ENCODE measurements at regions of chr3 and their contacts with region 1.

Region 1: GRCh38 chr3:71478568-71478967 is 105.0 kb downstream of the FOXP1 start:
- DNase-seq: peak in 8 of 9 donors; percentile 37 to 88 (median 68)
- ATAC-seq: peak; percentile 88
- H3K4me3 ChIP-seq: no peak overlapping the region
- H3K4me3 Mint-ChIP-seq: peak overlapping the region in 9 of 10 donors; percentile 59 to 98 (median 86)
- H3K27ac ChIP-seq: peak overlapping the region; percentile 89
- H3K27ac Mint-ChIP-seq: peak overlapping the region; percentile 57 to 100 (median 99)
- H3K4me1 ChIP-seq: peaks cover 12 to 72% of the 10 kb centered on the region in 2 donors
- H3K4me1 Mint-ChIP-seq: peaks cover 36 to 99% (median 93%) of the 10 kb centered on the region in 7 donors
- H3K27me3 ChIP-seq: no peaks in the 10 kb centered on the region
- H3K27me3 Mint-ChIP-seq: no peaks in the 10 kb centered on the region

Region 2: GRCh38 chr3:71466483-71466882 is 12.1 kb before region 1 on chr3:
- CTCF ChIA-PET with region 1: interaction called, 4 read pairs
- POLR2A ChIA-PET with region 1: interaction called, 9 read pairs
- intact Hi-C with region 1: loop called in 1 of 2 experiments (anchors 1 kb)
- DNase-seq: no peak
- ATAC-seq: no peak
- H3K4me3 ChIP-seq: no peak overlapping the region
- H3K4me3 Mint-ChIP-seq: peak overlapping the region in 3 of 10 donors; percentile 21 to 73 (median 61)
- H3K27ac ChIP-seq: no peak overlapping the region
- H3K27ac Mint-ChIP-seq: peak overlapping the region in 8 of 9 donors; percentile 8 to 99 (median 90)
- H3K4me1 ChIP-seq: peaks cover 5 to 44% of the 10 kb centered on the region in 2 donors
- H3K4me1 Mint-ChIP-seq: peaks cover 11 to 98% (median 79%) of the 10 kb centered on the region in 7 donors
- H3K27me3 ChIP-seq: no peaks in the 10 kb centered on the region
- H3K27me3 Mint-ChIP-seq: no peaks in the 10 kb centered on the region

Region 3: GRCh38 chr3:71495708-71496472 is 17.3 kb after region 1 on chr3:
- CTCF ChIA-PET with region 1: interaction called, 4 read pairs
- POLR2A ChIA-PET with region 1: interaction called, 14 read pairs
- intact Hi-C with region 1: loop called in 1 of 2 experiments (anchors 2 kb)
- DNase-seq: peak in 2 of 9 donors; percentile 24 to 34
- ATAC-seq: no peak
- H3K4me3 ChIP-seq: peak overlapping the region; percentile 33
- H3K4me3 Mint-ChIP-seq: peak overlapping the region; percentile 52 to 98 (median 80)
- H3K27ac ChIP-seq: peak overlapping the region; percentile 89
- H3K27ac Mint-ChIP-seq: peak overlapping the region; percentile 77 to 100 (median 98)
- H3K4me1 ChIP-seq: peaks cover 43 to 71% of the 10 kb centered on the region in 2 donors
- H3K4me1 Mint-ChIP-seq: peaks cover 54 to 90% (median 85%) of the 10 kb centered on the region in 7 donors
- H3K27me3 ChIP-seq: no peaks in the 10 kb centered on the region
- H3K27me3 Mint-ChIP-seq: no peaks in the 10 kb centered on the region

Region 4: GRCh38 chr3:71554649-71555048 is 76.1 kb after region 1 on chr3:
- CTCF ChIA-PET with region 1: no interaction called
- POLR2A ChIA-PET with region 1: no interaction called
- intact Hi-C with region 1: no loop called
- DNase-seq: no peak
- ATAC-seq: no peak
- H3K4me3 ChIP-seq: no peak overlapping the region
- H3K4me3 Mint-ChIP-seq: no peak overlapping the region
- H3K27ac ChIP-seq: no peak overlapping the region
- H3K27ac Mint-ChIP-seq: no peak overlapping the region
- H3K4me1 ChIP-seq: no peaks in the 10 kb centered on the region
- H3K4me1 Mint-ChIP-seq: peaks cover 0 to 5% (median 0%) of the 10 kb centered on the region in 7 donors
- H3K27me3 ChIP-seq: no peaks in the 10 kb centered on the region
- H3K27me3 Mint-ChIP-seq: peaks cover 0 to 4% (median 0%) of the 10 kb centered on the region in 5 donors